Activated T-helper 1 cell treated with anti-CD3 and anti-CD28 coated beads, Interleukin-12 subunit alpha, Interleukin-12 subunit beta, Interleukin-2, Interleukin-4 antibody, amounts not matched to agents 30 ng/mL and 10 ng/mL and 1 ng/mL, durations not matched to agents 14 hours and 24 hours and 36 hours (primary cell): ENCODE measurements at regions of chr6 and their contacts with region 1.

Region 1: DNA sequence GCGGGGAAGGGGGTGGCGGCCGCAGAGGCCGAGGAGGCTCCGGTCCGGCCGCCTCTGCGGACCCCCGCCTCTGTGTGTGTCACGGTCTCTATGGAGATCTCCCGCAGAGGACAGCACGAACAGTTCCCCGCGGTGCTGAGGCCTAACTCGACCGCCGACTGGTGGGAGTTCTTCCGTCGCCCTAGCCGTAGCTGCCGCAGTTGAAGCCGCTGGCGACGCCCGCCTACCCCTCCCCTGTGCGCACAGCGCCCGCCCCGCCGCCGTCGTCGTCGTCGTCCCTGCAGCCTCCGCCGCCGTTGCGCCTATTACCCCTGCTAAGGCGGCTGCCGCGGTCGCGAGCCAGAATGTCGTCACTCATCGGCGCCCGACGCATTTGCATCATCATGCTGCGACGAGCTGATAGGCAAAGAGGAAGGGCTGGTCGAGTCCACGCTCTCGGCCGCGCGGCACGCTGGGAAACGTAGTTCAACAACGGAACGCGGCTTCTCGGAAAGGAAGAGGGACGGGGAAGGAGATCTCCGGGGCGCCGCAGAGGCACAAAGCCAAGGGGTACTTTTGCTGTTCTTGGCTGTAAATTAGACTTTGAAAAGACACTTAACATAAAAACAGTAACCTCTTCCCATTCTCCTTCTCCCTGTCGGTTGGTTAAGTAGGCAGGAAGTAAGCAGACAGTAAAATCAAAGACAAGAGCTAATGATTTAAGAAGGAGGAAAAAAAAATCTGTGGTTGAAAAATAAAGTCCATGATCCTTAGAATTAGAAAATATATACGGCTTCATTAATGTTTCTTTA is at the start of gene NUP153:
- DNase-seq: peak; percentile 100
- H3K4me3 Mint-ChIP-seq: peak within 1 kb of the TSS; percentile 90
- H3K27ac Mint-ChIP-seq: peak within 1 kb of the TSS; percentile 97
- H3K4me1 Mint-ChIP-seq: peaks cover 45% of the 10 kb centered on the region
- H3K27me3 Mint-ChIP-seq: no peaks in the 10 kb centered on the region
- total RNA-seq, gene NUP153: 106 and 109 TPM in 2 replicates

Region 2: DNA sequence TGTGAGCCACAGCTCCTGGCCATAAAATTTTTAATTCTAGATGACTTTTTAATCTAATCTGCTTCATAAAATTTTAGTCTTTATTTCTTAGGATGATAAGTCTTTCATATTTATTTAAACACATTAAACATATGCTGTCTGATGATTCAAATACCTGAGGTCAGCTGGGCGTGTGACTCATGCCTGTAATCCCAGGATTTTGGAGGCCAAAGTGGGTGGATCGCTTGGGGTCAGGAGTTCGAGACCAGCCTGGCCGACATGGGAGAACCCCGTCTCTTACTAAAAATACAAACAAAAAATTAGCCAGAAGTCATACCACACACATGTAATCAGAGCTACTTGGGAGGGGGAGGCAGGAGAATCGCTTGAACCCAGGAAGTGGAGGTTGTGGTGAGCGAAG is 372.5 kb before region 1 on chr6:
- intact Hi-C with region 1: no loop called
- DNase-seq: no peak
- H3K4me3 Mint-ChIP-seq: no peak overlapping the region
- H3K27ac Mint-ChIP-seq: no peak overlapping the region
- H3K4me1 Mint-ChIP-seq: no peaks in the 10 kb centered on the region
- H3K27me3 Mint-ChIP-seq: no peaks in the 10 kb centered on the region

Region 3: GRCh38 chr6:17565399-17565798 is 141.4 kb before region 1 on chr6:
- intact Hi-C with region 1: no loop called
- DNase-seq: no peak
- H3K4me3 Mint-ChIP-seq: no peak overlapping the region
- H3K27ac Mint-ChIP-seq: no peak overlapping the region
- H3K4me1 Mint-ChIP-seq: no peaks in the 10 kb centered on the region
- H3K27me3 Mint-ChIP-seq: peaks cover 5% of the 10 kb centered on the region

Region 4: DNA sequence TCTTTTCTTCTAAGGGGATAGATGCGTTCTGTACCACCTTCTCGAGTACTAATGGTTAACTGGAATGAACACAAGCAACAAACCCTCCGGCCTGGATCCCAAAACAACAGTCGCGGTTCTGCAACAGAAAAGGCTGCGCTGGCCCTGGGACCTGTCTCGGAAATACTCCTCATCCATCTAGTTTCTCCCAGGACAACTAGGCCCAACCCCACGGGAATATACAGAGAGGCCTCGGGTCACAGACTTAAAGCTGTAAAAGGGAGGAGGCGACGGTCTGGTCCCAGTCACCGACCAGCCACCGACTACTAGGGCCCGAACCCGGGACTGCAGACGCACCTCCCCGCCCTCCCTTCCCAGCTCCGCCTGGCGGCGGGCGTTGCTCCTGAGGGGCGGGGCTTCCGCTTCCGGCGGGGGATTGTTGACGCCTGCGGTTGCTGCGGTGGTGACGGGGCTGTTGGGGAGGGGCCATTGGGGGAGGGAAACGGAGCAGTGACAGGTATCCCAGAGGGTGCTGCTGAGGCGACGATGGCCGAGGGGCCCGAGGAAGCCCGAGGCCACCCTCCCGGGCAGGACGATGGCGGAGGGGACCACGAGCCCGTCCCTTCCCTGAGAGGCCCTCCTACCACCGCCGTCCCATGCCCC is 106.8 kb before region 1 on chr6 and contains the start of gene FAM8A1:
- intact Hi-C with region 1: loop called (anchors 1 kb)
- DNase-seq: peak; percentile 92
- H3K4me3 Mint-ChIP-seq: peak within 1 kb of the TSS; percentile 85
- H3K27ac Mint-ChIP-seq: peak within 1 kb of the TSS; percentile 78
- H3K4me1 Mint-ChIP-seq: peaks cover 35% of the 10 kb centered on the region
- H3K27me3 Mint-ChIP-seq: peaks cover 2% of the 10 kb centered on the region
- total RNA-seq, gene FAM8A1: 4.5 and 4.6 TPM in 2 replicates

Region 5: GRCh38 chr6:17673543-17674254 is 33.1 kb before region 1 on chr6:
- intact Hi-C with region 1: loop called (anchors 1 kb)
- DNase-seq: no peak
- H3K4me3 Mint-ChIP-seq: no peak overlapping the region
- H3K27ac Mint-ChIP-seq: peak overlapping the region; percentile 87
- H3K4me1 Mint-ChIP-seq: peaks cover 21% of the 10 kb centered on the region
- H3K27me3 Mint-ChIP-seq: no peaks in the 10 kb centered on the region

Region 6: GRCh38 chr6:17808609-17809008 is 101.8 kb after region 1 on chr6:
- intact Hi-C with region 1: loop called (anchors 1 kb)
- DNase-seq: no peak
- H3K4me3 Mint-ChIP-seq: no peak overlapping the region
- H3K27ac Mint-ChIP-seq: no peak overlapping the region
- H3K4me1 Mint-ChIP-seq: no peaks in the 10 kb centered on the region
- H3K27me3 Mint-ChIP-seq: peaks cover 10% of the 10 kb centered on the region

Region 7: GRCh38 chr6:18122124-18123093 is 415.6 kb after region 1 on chr6 and contains the start of gene NHLRC1:
- intact Hi-C with region 1: loop called (anchors 10 kb)
- DNase-seq: peak; percentile 62
- H3K4me3 Mint-ChIP-seq: peak within 1 kb of the TSS; percentile 72
- H3K27ac Mint-ChIP-seq: peak within 1 kb of the TSS; percentile 62
- H3K4me1 Mint-ChIP-seq: peaks cover 8% of the 10 kb centered on the region
- H3K27me3 Mint-ChIP-seq: peaks cover 54% of the 10 kb centered on the region
- total RNA-seq, gene NHLRC1: 0.23 and 0.24 TPM in 2 replicates

Region 8: GRCh38 chr6:18264219-18264922 is 557.6 kb after region 1 on chr6 and contains the start of gene DEK:
- intact Hi-C with region 1: loop called (anchors 2 kb)
- DNase-seq: peak; percentile 77
- H3K4me3 Mint-ChIP-seq: peak within 1 kb of the TSS; percentile 87
- H3K27ac Mint-ChIP-seq: peak within 1 kb of the TSS; percentile 91
- H3K4me1 Mint-ChIP-seq: peaks cover 48% of the 10 kb centered on the region
- H3K27me3 Mint-ChIP-seq: peaks cover 4% of the 10 kb centered on the region
- total RNA-seq, gene DEK: 163 and 170 TPM in 2 replicates